ENCODE measurements at regions of chr11 and their contacts with region 1.

Region 1: DNA sequence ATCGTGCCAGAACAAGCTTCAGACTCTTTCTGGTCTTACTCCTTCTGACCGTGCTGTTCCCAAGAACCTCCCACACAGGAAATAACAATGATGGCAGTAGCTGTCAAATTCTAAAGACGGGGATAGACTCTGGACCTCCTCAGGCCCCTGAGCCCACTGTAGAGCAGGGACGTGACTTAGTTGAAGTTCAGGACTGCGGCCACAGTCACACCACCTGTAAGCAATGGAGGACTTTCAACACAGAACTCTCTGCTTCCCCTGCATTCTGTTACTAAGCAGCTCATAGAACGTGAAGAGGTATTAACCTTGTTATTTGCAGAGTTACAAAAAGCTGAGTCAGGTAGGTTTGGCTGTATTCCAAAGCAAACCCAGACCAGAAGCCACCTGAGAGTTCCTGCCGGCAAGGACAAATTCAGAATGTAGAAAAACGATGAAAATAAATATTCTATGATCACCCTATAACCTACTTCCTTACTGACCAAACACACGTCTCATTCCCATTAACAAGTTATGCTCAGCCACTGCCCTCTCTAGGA is 12.7 kb downstream of the TMEM45B start:
- DNase-seq: peak; percentile 99
- ATAC-seq: peak; percentile 65
- H3K4me3 ChIP-seq: peak overlapping the region; percentile 21; the same call in 1 of the 2 replicates
- H3K27ac ChIP-seq: peak overlapping the region; percentile 96
- H3K4me1 ChIP-seq: peaks cover 74% of the 10 kb centered on the region
- H3K27me3 ChIP-seq: no peaks in the 10 kb centered on the region
- CTCF ChIP-seq: peak; percentile 49; the same call in 1 of the 2 replicates

Region 2: GRCh38 chr11:129785383-129786111 is 42.8 kb before region 1 on chr11:
- CTCF ChIA-PET with region 1: interaction called, 6 read pairs
- POLR2A ChIA-PET with region 1: interaction called, 3 read pairs
- intact Hi-C with region 1: loop called (anchors 1 kb)
- DNase-seq: peak; percentile 86
- ATAC-seq: peak; percentile 49
- H3K4me3 ChIP-seq: no peak overlapping the region
- H3K27ac ChIP-seq: peak overlapping the region; percentile 45
- H3K4me1 ChIP-seq: peaks cover 34% of the 10 kb centered on the region
- H3K27me3 ChIP-seq: no peaks in the 10 kb centered on the region
- CTCF ChIP-seq: peak; percentile 90

Region 3: DNA sequence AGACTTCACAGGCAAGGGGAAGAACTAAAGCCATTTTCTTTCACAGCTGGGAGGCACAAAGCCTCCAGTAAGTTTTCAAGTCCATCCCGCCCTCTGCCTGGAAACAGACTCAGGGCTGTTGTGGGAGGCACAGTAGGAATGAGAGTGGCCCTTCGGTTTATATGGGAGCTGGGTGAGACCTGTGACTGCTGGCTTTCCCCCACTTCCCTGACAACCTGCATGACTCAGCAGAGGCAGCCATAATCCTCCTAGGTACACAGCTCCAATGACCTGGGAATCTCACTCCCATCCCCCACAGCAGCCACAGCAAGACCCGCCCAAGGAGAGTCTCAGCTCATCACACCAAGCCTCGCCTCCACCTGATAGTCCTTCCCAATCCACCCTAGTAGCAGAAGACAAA is 24.8 kb before region 1 on chr11:
- CTCF ChIA-PET with region 1: no interaction called
- POLR2A ChIA-PET with region 1: no interaction called
- intact Hi-C with region 1: loop called (anchors 1 kb)
- DNase-seq: peak; percentile 46
- ATAC-seq: peak; percentile 45
- H3K4me3 ChIP-seq: no peak overlapping the region
- H3K27ac ChIP-seq: peak overlapping the region; percentile 56
- H3K4me1 ChIP-seq: peaks cover 15% of the 10 kb centered on the region
- H3K27me3 ChIP-seq: no peaks in the 10 kb centered on the region
- CTCF ChIP-seq: no peak

Region 4: DNA sequence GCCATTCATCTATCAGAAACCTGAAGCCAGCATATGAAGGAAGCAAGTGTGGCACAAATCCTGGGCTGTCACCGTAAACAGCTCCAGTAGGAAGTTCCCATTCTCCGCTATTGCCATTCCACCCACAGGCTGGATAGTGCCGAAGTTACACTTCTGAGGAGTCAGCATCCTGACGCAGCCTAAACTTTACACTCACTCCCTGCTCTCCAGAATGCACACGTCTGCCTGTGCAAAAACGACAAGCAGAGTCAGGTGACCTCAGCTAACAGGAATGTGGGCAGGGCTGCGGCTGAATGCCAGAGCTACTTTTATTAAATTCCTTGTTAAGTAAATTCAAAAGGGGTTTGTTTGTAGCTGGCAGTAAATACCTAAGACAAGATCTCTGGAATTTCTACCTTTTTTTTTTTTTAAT is 33.3 kb after region 1 on chr11:
- CTCF ChIA-PET with region 1: no interaction called
- POLR2A ChIA-PET with region 1: no interaction called
- intact Hi-C with region 1: loop called (anchors 1 kb)
- DNase-seq: peak; percentile 100
- ATAC-seq: peak; percentile 95
- H3K4me3 ChIP-seq: peak overlapping the region; percentile 38; the same call in 1 of the 2 replicates
- H3K27ac ChIP-seq: peak overlapping the region; percentile 95
- H3K4me1 ChIP-seq: peaks cover 33% of the 10 kb centered on the region
- H3K27me3 ChIP-seq: no peaks in the 10 kb centered on the region
- CTCF ChIP-seq: no peak

Region 5: GRCh38 chr11:129930296-129930695 is 101.9 kb after region 1 on chr11:
- CTCF ChIA-PET with region 1: no interaction called
- POLR2A ChIA-PET with region 1: no interaction called
- intact Hi-C with region 1: no loop called
- DNase-seq: peak; percentile 93
- ATAC-seq: peak; percentile 99
- H3K4me3 ChIP-seq: no peak overlapping the region
- H3K27ac ChIP-seq: peak overlapping the region; percentile 35
- H3K4me1 ChIP-seq: peaks cover 28% of the 10 kb centered on the region
- H3K27me3 ChIP-seq: no peaks in the 10 kb centered on the region
- CTCF ChIP-seq: no peak

Region 6: GRCh38 chr11:129992161-129992944 is 164.0 kb after region 1 on chr11:
- CTCF ChIA-PET with region 1: no interaction called
- POLR2A ChIA-PET with region 1: no interaction called
- intact Hi-C with region 1: no loop called
- DNase-seq: peak; percentile 53
- ATAC-seq: peak; percentile 68
- H3K4me3 ChIP-seq: no peak overlapping the region
- H3K27ac ChIP-seq: no peak overlapping the region
- H3K4me1 ChIP-seq: no peaks in the 10 kb centered on the region
- H3K27me3 ChIP-seq: no peaks in the 10 kb centered on the region
- CTCF ChIP-seq: peak; percentile 64